ENCODE measurements at regions of chr1 and their contacts with region 1.

Region 1: DNA sequence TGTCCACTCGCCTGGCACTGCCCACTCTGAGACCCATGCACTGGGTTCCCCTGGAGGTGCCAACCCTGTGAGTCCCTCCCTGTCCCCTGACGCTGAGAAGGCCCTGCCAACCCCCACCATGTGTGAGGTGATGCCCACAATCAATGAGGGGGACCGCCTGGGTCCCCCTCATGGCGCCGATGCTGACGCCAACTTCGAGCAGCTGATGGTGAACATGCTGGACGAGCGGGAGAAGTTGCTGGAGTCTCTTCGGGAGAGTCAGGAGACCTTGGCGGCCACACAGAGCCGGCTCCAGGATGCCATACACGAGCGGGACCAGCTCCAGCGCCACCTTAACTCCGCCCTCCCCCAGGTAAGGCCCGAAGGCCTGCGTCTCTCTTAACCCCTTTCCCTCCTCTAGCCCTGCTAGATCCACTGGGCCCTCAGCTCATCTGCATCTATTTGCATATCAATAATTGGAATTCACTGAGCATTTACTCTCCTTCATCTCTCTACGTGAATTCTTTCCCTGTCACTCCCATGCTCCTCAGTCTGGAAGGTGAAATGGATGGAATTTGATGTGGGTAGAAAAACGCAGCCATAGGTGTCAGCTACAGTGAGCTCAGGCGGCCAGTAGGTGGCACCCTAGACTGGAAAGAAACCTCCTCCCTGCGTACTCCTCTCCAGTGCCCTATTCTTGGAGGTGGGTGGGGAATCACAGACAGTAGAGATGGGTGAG is 12.8 kb downstream of the PPFIA4 start:
- DNase-seq: peak; percentile 63 to 88 (median 76)
- ATAC-seq: peak; percentile 88
- H3K4me3 ChIP-seq: no peak overlapping the region
- H3K4me1 ChIP-seq: no peaks in the 10 kb centered on the region
- CTCF ChIP-seq: peak; percentile 76

Region 2: DNA sequence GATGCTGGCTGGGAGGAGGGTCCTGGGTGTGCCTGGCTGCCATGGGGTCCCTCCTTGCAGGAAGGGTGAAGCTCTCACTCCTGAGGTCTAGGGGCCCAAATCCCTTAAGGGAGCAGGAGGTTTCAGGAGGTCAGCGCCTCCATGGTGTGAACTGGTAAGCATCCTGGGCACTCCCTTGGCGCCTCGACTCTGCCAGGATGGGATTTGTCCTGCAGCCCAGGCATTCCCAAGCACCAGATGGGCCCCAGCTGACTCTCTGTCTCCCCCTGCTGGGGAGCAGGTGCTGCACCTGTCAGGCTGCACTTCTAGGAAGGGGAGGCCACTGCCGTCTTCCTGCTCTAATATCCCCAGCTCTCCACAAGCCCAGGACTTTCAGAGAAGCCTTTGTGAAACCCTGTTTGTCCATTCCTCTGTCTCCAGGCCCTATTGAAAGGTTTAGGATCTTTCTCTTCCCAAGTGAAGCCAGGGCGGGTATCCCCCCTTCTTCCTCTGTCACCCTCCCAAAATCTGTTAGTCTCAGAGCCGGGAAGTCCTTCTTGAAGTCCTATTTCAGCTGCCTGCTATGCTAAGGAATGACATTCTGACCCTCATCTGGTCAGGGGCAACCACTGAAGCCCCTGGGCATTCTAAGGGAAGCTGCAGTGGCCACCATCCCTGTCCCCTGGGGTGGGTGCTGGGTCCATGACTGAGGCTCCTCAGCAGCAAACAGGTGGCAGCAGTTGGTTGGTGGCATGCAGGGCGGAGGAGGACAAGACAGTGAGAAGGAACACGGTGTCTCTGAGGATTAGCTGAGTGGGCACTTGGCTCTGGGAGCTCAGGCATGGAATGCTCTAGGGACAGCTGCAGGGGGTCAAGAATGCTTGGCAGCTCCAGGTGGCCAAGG is 133.3 kb after region 1 on chr1:
- intact Hi-C with region 1: loop called (anchors 2 to 5 kb)
- DNase-seq: peak; percentile 62 to 79 (median 76)
- ATAC-seq: peak; percentile 85
- H3K4me3 ChIP-seq: no peak overlapping the region
- H3K4me1 ChIP-seq: no peaks in the 10 kb centered on the region
- CTCF ChIP-seq: peak; percentile 70

Region 3: DNA sequence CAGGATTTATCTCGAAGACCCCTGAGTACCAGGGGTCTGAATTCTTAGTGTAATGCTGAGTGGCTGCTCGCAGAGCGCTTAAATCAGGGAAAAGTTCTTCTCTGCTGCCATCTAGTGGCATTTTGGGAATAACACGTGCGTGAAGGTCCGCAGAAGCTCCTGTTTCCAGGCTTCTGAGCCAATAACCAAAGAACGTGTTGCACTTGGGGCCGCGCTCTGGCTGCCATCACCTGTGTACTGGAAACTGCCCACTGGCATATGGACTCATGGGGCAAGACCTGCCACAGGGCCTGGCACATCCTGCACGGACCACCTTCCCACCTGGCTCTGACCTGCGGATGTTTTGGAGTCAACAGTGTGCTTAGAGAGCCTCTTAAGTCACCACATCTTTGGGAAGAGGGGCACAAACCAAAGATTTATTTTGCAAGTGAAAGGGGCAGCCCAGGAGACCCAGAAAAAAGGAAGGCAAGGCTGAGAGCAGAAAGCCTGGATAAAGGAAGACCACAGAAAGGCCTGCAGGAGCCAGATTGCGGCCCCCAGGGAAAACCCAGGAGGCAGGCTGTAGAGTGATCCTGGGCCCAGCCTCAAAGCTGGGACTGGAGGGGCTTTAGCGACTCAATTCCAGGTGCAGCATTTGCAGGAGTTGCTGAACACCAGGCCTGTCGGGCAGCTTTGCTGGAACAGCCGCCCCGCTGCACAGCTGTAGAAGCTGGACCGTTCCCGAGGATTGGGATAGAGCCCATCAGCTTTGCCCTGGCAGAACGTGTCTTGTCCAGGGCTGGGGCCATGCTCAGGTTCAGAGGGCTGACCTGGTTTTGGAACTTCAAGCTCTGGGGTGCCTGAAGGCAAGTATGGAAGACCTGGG is 177.5 kb after region 1 on chr1:
- intact Hi-C with region 1: loop called (anchors 5 kb)
- DNase-seq: peak in 1 of 3 donors; percentile 73
- ATAC-seq: peak; percentile 72
- H3K4me3 ChIP-seq: no peak overlapping the region
- H3K4me1 ChIP-seq: no peaks in the 10 kb centered on the region
- CTCF ChIP-seq: peak; percentile 66

Measured in mucosa of descending colon (tissue), 3 donors.